ENCODE measurements at regions of chr3 and their contacts with region 1.

Region 1: GRCh38 chr3:173395412-173396181 is 1.9 kb upstream of the NLGN1 start:
- DNase-seq: peak; percentile 86
- H3K4me3 Mint-ChIP-seq: peak overlapping the region; percentile 83
- H3K27ac Mint-ChIP-seq: no peak overlapping the region
- H3K4me1 Mint-ChIP-seq: peaks cover 23% of the 10 kb centered on the region
- H3K27me3 Mint-ChIP-seq: peaks cover 60% of the 10 kb centered on the region

Region 2: DNA sequence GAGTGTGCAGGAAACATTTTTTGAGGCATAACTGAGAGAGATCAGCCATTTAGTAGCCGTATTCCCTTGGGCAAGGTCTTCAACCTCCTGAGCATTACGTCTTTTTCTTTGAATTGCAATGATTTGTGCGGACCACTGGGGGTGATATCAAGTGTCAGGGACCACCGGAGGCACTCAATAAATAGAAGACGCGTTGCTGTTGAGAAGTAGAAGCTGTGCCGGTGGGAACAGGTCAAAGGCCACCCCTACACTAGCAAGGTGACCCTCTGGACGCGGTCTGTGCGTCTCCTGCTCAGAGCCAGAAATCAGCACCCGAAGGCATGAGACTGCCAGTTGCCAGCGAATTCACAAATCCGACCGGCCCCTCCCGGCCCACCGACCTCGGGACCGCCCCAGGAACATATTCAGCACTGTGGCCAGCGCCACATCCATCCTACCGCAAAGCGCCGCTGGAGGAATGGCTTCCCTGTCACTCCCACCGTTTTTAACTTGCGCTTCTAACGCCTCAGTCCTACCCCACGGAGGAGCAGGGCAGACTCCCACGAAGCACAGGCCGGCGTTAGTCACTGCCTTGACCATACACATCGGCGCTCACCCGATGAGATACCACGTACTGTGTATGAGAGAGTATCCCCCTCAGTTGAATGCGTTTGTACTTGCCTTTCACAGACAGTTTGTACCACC is 946.0 kb before region 1 on chr3:
- intact Hi-C with region 1: loop called (anchors 5 kb)
- DNase-seq: peak; percentile 76
- H3K4me3 Mint-ChIP-seq: peak overlapping the region; percentile 78
- H3K27ac Mint-ChIP-seq: no peak overlapping the region
- H3K4me1 Mint-ChIP-seq: peaks cover 26% of the 10 kb centered on the region
- H3K27me3 Mint-ChIP-seq: peaks cover 84% of the 10 kb centered on the region

Region 3: GRCh38 chr3:173584838-173585831 is 189.5 kb after region 1 on chr3:
- intact Hi-C with region 1: loop called (anchors 5 kb)
- DNase-seq: no peak
- H3K4me3 Mint-ChIP-seq: peak overlapping the region; percentile 5
- H3K27ac Mint-ChIP-seq: no peak overlapping the region
- H3K4me1 Mint-ChIP-seq: peaks cover 8% of the 10 kb centered on the region
- H3K27me3 Mint-ChIP-seq: peaks cover 24% of the 10 kb centered on the region

Measured in activated CD4-positive, alpha-beta T cell treated with anti-CD3 and anti-CD28 coated beads, Interleukin-2, amount 10 ng/mL, durations not matched to agents 24 days and 14 days (primary cell).